ENCODE measurements at regions of chr12 and their contacts with region 1.

Region 1: GRCh38 chr12:74922117-74922516 is 287.5 kb downstream of the KCNC2 start:
- DNase-seq: no peak
- ATAC-seq: no peak

Region 2: DNA sequence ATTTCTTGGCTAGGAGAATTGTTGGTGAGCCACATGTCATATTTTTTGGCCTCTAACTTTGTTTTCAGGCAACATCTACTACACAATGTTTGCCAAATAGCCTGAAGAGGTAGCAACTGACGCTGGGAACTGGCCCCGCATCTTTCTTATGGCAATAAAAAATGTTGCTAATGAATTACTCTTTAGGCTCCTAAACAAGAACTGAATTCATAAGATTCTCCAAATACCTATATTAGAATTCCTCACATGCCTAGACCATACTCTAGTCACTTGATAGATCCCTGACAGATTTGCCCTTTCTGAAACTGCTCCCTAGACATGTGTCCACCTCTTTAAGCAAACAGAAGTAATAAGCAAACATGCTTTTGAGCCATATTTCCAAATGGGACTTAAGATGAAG is 593.5 kb before region 1 on chr12:
- intact Hi-C with region 1: loop called (anchors 5 kb)
- DNase-seq: no peak
- ATAC-seq: no peak